Right ventricle myocardium superior (tissue), 1 donor: ENCODE measurements at regions of chr22 and their contacts with region 1.

Region 1: GRCh38 chr22:50620593-50621355 is 7.2 kb downstream of the ARSA start:
- DNase-seq: peak; percentile 88
- ATAC-seq: peak; percentile 82

Region 2: GRCh38 chr22:50553310-50553709 is 67.5 kb before region 1 on chr22:
- intact Hi-C with region 1: loop called (anchors 2 kb)
- DNase-seq: no peak
- ATAC-seq: no peak

Region 3: DNA sequence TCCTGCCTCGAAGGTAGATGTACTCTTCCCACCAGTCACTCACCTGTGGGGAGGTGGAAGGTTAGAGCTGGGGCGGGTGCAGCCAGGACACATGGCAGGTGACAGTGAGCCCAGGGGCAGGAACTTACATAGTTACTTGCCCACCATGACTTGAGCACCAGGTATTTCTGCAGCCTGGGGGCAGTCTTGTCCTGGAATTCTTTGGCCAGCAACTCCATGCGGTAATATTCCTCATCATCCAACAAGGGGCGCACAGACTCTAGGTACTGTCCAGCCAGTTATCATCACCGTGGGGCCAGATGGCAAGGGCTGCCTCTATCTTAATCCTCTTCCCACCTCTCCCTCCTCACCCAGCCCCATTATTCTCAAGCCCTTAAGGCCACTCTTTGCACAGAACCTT is 44.7 kb before region 1 on chr22:
- intact Hi-C with region 1: loop called (anchors 5 kb)
- DNase-seq: peak; percentile 37
- ATAC-seq: peak; percentile 6

Region 4: DNA sequence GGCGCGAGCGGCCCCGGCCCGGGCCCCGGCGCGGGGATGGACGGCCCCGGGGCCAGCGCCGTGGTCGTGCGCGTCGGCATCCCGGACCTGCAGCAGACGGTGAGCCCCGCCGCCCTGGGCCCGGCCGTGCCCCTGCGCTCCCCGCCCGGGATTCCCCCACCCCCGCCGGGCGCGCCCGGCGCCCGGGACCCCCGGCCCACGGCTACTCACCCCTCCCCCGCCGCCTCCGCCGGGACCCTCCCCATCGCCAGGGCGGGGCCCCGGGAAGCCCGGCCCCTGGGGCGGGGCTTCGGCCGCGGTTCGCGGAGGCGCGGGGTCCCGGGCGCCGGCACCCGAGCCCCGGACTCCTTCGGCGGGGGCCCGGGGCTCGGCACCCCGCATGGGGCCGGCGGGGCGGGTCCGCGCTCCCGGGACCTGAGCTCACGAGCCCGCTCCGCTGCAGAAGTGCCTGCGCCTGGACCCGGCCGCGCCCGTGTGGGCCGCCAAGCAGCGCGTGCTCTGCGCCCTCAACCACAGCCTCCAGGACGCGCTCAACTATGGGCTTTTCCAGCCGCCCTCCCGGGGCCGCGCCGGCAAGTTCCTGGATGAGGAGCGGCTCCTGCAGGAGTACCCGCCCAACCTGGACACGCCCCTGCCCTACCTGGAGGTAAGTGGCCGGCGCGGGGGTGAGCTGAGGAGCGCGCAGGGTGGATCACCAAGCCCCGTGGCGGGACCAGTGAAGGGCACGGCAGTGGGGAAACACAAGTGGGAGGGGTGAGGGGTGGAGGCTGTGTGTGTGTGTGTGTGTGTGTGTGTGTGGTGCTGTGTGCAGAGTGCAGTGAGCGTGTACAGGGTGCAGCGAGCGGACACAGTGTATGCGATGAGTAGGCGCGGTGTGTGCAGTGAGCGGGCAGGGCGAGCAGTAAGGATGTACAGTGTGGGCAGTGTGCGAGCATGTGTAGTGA is 54.1 kb after region 1 on chr22:
- intact Hi-C with region 1: loop called (anchors 5 kb)
- DNase-seq: no peak
- ATAC-seq: no peak

Region 5: DNA sequence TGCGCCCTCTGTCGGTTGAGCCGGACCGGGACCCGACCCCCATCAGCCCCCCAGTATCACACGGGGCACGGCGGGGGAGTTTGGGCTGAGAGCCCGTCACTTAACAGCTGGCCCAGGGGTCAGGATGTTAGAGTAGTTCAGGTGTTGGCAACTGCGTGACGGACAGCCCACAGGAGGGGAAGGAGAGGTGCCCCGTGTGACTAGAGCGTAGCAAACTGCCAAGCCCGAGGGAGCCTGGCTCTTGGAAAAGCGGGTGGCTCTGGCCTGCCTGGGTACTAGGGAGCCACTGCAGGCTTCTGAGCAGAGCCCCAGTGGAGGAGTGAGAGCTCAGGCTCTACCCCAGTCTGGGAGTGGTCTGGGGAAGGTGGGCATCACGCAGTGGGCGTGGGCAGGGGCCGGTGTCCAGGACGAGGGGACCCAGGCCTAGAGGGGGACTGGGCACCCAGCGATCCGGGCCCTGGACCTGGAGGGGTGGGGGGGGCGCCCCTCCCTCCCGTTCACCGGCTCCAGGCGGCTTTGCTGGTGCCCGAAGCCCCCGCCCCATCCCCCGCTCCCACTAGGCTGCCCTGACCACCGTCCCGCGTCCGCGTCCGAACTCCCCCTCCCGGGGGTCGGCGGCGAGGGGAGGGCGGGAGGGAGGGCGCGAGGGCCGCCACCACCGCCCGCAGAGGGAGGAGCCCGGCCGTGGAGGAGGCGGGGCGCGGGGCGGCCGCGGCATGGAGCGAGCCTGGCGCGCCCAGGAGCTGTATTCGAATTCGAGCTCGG is 76.2 kb after region 1 on chr22:
- intact Hi-C with region 1: no loop called
- DNase-seq: peak; percentile 41
- ATAC-seq: peak; percentile 81